ENCODE measurements at regions of chr17 and their contacts with region 1.

Region 1: DNA sequence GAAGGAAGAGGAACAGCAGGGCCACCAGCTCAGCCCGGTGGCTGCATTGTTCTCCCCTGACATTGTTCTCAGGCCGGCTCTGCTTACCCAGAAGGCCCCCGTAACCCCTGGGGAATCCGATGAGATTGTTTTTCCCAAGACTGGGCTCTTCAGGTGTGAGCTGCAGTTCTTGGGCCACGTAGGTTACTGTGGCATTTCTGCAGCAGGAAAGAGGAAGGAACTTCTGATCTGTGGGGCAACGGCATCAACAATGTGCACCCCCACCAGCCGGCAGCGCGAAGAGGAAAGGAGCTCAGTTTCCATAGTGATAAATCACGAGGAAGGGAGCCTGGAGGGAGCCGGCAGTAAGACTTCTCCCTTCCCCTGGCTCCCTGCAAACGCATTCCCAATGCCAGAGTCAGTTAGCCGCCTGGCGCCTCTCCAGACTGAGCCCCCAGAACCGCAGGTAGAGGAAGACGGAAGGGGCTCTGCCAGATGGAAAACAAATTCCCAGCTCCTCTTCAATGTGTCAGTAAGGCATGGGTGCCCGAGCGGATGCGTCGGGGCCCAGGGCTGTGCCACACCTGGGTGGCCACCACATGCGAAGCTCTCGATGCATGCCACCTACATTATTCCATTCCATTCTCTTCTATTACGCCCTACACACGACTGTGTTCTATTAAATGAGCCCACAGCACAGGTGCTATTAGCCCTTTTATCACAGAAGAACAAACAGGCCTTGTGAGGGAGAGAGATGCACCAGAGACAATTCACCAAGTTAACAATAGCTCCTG is 21.5 kb upstream of the PECAM1 start:
- DNase-seq: peak; percentile 39
- H3K4me3 ChIP-seq: no peak overlapping the region
- H3K27ac ChIP-seq: peak overlapping the region in 1 of 2 donors; percentile 10
- H3K4me1 ChIP-seq: peaks cover 26% of the 10 kb centered on the region
- H3K27me3 ChIP-seq: no peaks in the 10 kb centered on the region
- CTCF ChIP-seq: no peak
- POLR2A ChIP-seq: no peak

Region 2: DNA sequence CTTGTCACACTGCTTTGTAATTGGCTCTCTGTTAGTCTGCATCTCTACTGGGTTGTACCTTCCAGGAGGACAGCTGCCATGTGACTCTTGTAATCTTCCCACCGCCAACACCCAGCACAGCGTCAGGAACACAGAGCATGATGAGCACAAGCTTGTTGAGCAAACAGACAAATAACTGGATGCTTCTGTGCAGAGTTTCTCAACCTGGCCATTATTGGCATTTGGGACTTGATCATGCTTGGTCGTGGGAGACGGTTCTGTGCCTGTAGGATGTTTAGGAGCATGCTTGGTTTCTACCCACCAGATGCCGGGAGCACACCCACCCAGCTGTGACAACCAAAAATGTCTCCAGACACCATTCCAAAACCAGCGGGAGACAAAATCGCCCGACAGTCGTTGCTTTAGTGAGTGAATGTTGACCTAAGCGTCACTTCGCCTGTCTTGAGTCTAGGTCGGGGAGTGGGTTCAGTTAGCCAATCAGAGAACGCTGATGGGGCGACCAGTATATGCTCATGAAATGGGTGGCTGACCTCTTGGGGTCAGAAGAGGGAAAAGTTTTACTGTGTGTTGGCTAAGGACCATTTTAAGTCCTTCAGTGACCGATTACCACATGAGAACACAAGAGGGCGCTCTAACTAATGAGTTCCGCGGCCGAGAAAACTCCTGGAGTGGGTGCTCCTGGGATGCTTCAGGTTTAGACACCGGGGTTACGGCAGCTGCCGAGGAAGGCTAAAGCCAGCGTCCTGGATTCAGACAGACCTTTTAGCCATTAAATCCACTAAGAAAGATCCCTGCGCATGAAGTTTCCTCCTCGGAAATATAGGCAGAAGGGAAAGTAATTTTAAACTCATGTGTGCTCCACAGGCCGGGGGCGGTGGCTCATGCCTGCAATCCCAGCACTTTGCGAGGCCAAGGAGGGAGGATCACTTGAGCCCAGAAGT is 91.3 kb before region 1 on chr17:
- intact Hi-C with region 1: loop called (anchors 5 kb)
- DNase-seq: peak; percentile 84
- H3K4me3 ChIP-seq: peak overlapping the region in 1 of 2 donors; percentile 1
- H3K27ac ChIP-seq: peak overlapping the region in 1 of 2 donors; percentile 29
- H3K4me1 ChIP-seq: peaks cover 9% of the 10 kb centered on the region
- H3K27me3 ChIP-seq: no peaks in the 10 kb centered on the region
- CTCF ChIP-seq: peak; percentile 59 to 76 (median 63)
- POLR2A ChIP-seq: no peak

Measured in testis (tissue), 5 donors.